ENCODE measurements at regions of chr12 and their contacts with region 1.

Region 1: GRCh38 chr12:48890657-48891418 is 25.2 kb upstream of the RND1 start:
- DNase-seq: peak; percentile 80
- H3K4me3 Mint-ChIP-seq: no peak overlapping the region
- H3K27ac Mint-ChIP-seq: no peak overlapping the region
- H3K4me1 Mint-ChIP-seq: peaks cover 8% of the 10 kb centered on the region
- H3K27me3 Mint-ChIP-seq: peaks cover 16% of the 10 kb centered on the region

Region 2: GRCh38 chr12:48671231-48671856 is 219.5 kb before region 1 on chr12:
- CTCF ChIA-PET with region 1: no interaction called
- POLR2A ChIA-PET with region 1: no interaction called
- DNase-seq: no peak
- H3K4me3 Mint-ChIP-seq: no peak overlapping the region
- H3K27ac Mint-ChIP-seq: no peak overlapping the region
- H3K4me1 Mint-ChIP-seq: peaks cover 8% of the 10 kb centered on the region
- H3K27me3 Mint-ChIP-seq: no peaks in the 10 kb centered on the region

Region 3: DNA sequence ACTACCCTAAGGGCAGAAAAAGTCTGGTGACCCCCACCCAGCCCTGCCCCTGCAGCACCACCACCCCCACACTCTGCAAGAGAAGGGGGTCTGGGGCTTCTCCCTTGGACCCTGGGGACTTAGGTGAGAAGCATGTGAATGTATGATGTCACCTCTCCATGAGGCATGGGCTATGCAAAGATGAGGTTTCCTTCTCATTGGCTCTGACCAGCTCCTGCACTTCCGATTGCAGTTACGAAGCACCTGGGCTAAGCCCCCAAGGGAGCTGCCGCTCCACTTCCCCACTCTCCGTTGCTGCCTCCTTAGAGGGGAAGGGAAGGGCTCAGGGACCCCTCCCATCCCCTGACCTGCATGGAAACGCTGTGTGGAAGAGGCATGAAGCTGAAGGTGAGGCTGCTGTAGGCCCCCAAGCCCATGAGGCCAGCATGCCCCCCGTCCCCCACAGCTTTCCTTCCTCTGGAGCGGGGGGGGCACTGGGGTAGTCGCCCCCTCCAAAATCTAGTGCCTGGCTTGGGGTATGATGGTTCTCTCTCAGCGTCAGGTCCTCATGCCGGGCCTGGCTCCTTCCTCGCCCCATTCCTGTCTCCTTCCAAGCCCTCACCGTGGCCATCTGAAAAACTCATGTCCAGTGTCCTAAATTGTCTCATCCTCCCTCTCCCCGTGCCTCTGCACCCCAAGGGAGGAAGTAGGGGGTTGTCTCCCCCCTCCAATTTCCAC is 33.4 kb before region 1 on chr12:
- CTCF ChIA-PET with region 1: interaction called, 125 read pairs
- POLR2A ChIA-PET with region 1: interaction called, 31 read pairs
- DNase-seq: no peak
- H3K4me3 Mint-ChIP-seq: no peak overlapping the region
- H3K27ac Mint-ChIP-seq: no peak overlapping the region
- H3K4me1 Mint-ChIP-seq: peaks cover 16% of the 10 kb centered on the region
- H3K27me3 Mint-ChIP-seq: no peaks in the 10 kb centered on the region

Region 4: DNA sequence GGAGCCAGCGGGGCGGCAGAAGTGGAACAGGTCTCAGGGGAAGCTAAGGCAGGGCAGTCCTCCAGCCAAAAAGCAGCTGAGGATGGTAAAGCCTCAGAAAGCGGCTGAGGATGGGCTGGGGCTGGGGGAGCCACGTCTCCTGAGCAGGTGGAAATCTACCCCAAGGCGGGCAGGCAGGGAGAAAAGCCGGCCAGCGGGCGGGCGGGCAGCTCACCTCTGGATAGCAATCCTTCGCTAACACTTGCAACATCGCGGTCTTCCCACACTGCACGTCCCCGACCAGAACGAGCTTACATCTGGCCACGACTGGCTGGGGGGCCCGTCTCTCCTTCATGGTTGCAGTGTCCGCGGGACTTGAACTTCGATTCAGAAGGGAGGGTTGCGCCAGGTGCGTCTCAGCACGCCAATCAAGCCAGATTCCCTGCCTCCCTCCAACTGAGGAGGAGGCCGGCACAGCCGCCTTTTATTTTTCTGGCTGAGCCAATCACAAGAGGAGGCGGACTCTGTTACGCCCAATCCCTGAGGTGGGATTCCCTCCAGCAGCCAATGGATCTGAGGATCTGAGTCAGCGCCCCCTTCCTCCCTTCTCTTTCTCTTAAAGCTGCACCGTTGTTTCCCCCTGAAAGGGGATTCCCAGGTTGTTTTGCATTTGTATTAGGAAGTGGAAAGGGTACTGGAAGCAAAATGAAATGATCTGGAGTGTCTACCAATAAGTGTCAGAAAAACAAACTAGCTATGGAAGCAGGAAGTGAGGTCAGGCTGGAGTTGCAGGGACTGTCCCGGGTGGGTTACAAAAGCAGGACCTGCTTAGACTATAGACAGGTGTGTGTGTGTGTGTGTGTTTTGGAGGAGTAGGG is 25.2 kb before region 1 on chr12 and contains the start of gene RND1:
- CTCF ChIA-PET with region 1: interaction called, 11 read pairs
- POLR2A ChIA-PET with region 1: interaction called, 8 read pairs
- DNase-seq: peak; percentile 85
- H3K4me3 Mint-ChIP-seq: peak within 1 kb of the TSS; percentile 82
- H3K27ac Mint-ChIP-seq: peak within 1 kb of the TSS; percentile 32
- H3K4me1 Mint-ChIP-seq: peaks cover 28% of the 10 kb centered on the region
- H3K27me3 Mint-ChIP-seq: peaks cover 24% of the 10 kb centered on the region
- total RNA-seq, gene RND1: 2.6 to 3.0 TPM

Region 5: DNA sequence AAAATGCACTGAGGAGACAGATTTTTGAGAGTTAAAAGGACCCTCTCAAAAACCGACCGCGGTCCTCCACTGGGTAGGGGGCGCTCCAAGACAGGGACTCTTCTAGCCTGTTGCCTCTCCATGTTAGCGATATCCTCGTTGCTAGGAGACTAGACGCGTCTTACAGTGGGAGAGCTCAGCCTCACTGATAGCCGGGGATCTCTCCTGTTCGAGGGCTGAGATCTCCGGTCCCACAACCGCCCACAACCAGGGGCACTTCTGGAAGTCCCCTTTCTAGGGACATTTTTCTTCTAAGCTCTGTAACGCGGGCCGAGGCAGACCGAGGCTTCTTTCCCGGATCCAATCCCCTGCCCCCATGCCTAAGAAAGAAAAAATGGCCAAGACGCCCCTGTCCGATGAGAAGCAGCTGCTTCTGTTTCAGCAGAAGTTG is 13.2 kb after region 1 on chr12:
- CTCF ChIA-PET with region 1: interaction called, 45 read pairs
- POLR2A ChIA-PET with region 1: no interaction called
- DNase-seq: peak; percentile 84
- H3K4me3 Mint-ChIP-seq: peak overlapping the region; percentile 52
- H3K27ac Mint-ChIP-seq: no peak overlapping the region
- H3K4me1 Mint-ChIP-seq: peaks cover 21% of the 10 kb centered on the region
- H3K27me3 Mint-ChIP-seq: peaks cover 8% of the 10 kb centered on the region

Region 6: GRCh38 chr12:48977315-48978281 is 86.8 kb after region 1 on chr12:
- CTCF ChIA-PET with region 1: interaction called, 13 read pairs
- POLR2A ChIA-PET with region 1: no interaction called
- DNase-seq: peak; percentile 79
- H3K4me3 Mint-ChIP-seq: peak overlapping the region; percentile 45
- H3K27ac Mint-ChIP-seq: no peak overlapping the region
- H3K4me1 Mint-ChIP-seq: peaks cover 59% of the 10 kb centered on the region
- H3K27me3 Mint-ChIP-seq: peaks cover 91% of the 10 kb centered on the region

Region 7: GRCh38 chr12:49170924-49171323 is 280.1 kb after region 1 on chr12:
- CTCF ChIA-PET with region 1: no interaction called
- POLR2A ChIA-PET with region 1: no interaction called
- DNase-seq: no peak
- H3K4me3 Mint-ChIP-seq: no peak overlapping the region
- H3K27ac Mint-ChIP-seq: no peak overlapping the region
- H3K4me1 Mint-ChIP-seq: no peaks in the 10 kb centered on the region
- H3K27me3 Mint-ChIP-seq: peaks cover 3% of the 10 kb centered on the region